Activated CD4-positive, alpha-beta T cell treated with anti-CD3 and anti-CD28 coated beads for 36 hours (primary cell): ENCODE measurements at regions of chr6 and their contacts with region 1.

Region 1: DNA sequence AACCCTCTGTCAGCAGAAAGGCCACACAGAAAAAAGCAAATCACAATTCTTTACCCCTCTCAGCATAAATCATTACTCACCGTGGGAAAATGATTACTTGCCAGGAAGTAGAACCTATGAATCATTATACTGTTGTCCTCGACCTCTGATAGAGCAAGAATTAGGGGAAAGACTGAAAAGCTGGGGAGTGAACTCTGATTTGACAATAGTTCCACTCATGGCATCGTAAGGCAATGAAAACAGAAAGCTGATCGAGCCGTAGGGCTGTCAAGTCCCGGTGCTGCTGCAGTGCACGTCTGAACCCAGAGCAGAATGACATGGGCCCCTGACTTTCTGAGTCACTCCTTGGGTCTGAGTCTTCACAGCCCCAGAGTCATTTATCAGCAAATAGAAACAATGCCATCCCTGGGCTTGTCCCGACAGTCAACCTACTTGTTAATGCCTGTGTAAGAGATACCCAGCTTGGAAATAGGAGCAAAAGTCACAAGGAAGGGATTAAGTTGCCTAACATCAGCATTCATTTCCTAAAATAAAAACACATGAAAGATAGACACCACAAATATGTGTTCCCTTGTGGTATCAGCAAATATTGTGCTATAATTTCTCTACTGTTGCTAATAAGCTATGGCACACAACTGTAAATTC is 224.8 kb upstream of the MARCKS start:
- DNase-seq: peak; percentile 78
- ATAC-seq: peak; percentile 90
- H3K4me3 Mint-ChIP-seq: peak overlapping the region; percentile 29
- H3K27ac Mint-ChIP-seq: peak overlapping the region; percentile 63
- H3K4me1 Mint-ChIP-seq: peaks cover 52% of the 10 kb centered on the region
- H3K27me3 Mint-ChIP-seq: peaks cover 15% of the 10 kb centered on the region

Region 2: DNA sequence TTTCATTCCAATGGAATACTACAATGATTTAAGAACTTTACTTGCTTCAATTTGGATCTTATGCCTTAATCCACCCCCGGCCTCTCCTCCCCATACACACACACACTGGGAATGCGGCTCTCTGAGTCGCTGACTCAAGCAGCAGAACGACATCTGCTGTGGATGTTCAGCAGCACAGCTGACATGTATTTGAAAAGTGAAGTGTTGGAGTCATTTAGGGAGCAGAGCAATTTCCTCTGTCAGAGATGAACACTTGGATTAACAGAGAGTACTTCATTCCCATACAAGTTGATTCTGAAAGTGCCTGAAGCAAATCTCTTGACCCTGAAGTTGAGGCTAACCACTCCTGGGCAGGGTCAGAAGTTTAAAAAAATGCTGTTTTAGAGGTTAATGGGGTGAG is 1350.1 kb before region 1 on chr6:
- CTCF ChIA-PET with region 1: no interaction called
- POLR2A ChIA-PET with region 1: no interaction called
- intact Hi-C with region 1: loop called in 1 of 2 experiments (anchors 10 kb)
- DNase-seq: no peak
- ATAC-seq: no peak
- H3K4me3 Mint-ChIP-seq: no peak overlapping the region
- H3K27ac Mint-ChIP-seq: no peak overlapping the region
- H3K4me1 Mint-ChIP-seq: peaks cover 16% of the 10 kb centered on the region
- H3K27me3 Mint-ChIP-seq: peaks cover 33% of the 10 kb centered on the region

Region 3: GRCh38 chr6:113530803-113531202 is 101.5 kb before region 1 on chr6:
- CTCF ChIA-PET with region 1: no interaction called
- POLR2A ChIA-PET with region 1: no interaction called
- intact Hi-C with region 1: no loop called
- DNase-seq: no peak
- ATAC-seq: no peak
- H3K4me3 Mint-ChIP-seq: no peak overlapping the region
- H3K27ac Mint-ChIP-seq: no peak overlapping the region
- H3K4me1 Mint-ChIP-seq: no peaks in the 10 kb centered on the region
- H3K27me3 Mint-ChIP-seq: peaks cover 4% of the 10 kb centered on the region

Region 4: GRCh38 chr6:113690281-113691259 is 58.2 kb after region 1 on chr6:
- CTCF ChIA-PET with region 1: no interaction called
- POLR2A ChIA-PET with region 1: no interaction called
- intact Hi-C with region 1: loop called in 1 of 2 experiments (anchors 2 kb)
- DNase-seq: peak; percentile 42
- ATAC-seq: peak; percentile 65
- H3K4me3 Mint-ChIP-seq: no peak overlapping the region
- H3K27ac Mint-ChIP-seq: no peak overlapping the region
- H3K4me1 Mint-ChIP-seq: peaks cover 3% of the 10 kb centered on the region
- H3K27me3 Mint-ChIP-seq: no peaks in the 10 kb centered on the region

Region 5: DNA sequence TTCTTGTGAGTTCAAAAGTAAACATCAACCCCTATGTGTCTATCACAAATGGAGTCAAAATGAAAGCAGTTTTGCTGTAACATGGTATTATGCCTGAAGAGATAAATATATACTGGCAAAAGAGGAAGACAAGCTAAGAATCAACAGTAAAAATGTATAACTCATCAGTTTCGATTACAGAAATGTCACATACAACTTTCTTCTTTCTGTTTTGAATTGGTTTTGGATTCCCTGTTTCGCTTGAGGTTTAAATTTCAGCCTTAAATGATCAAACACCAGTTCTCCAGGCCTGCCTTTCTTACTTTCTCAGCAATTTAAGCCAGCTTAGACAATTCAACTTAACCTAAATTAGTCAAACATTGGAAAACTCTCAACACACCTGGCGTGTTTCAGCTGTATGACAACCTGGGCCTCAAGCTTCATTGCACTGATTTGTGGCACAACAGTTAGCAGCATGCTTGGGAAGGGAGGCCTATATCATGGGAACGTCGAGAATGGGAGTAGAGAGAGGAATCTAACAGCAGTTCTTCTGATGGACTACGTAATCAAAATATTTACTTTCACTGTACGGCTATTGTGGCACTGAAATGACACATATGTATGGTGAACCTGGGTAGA is 172.9 kb after region 1 on chr6:
- CTCF ChIA-PET with region 1: no interaction called
- POLR2A ChIA-PET with region 1: interaction called, 4 read pairs
- intact Hi-C with region 1: loop called in 1 of 2 experiments (anchors 5 kb)
- DNase-seq: no peak
- ATAC-seq: peak; percentile 71
- H3K4me3 Mint-ChIP-seq: no peak overlapping the region
- H3K27ac Mint-ChIP-seq: no peak overlapping the region
- H3K4me1 Mint-ChIP-seq: peaks cover 6% of the 10 kb centered on the region
- H3K27me3 Mint-ChIP-seq: no peaks in the 10 kb centered on the region